ENCODE measurements at regions of chr12 and their contacts with region 1.

Region 1: GRCh38 chr12:117119592-117120198 is 20.5 kb upstream of the TESC start:
- DNase-seq: no peak
- ATAC-seq: peak; percentile 39 to 56

Region 2: DNA sequence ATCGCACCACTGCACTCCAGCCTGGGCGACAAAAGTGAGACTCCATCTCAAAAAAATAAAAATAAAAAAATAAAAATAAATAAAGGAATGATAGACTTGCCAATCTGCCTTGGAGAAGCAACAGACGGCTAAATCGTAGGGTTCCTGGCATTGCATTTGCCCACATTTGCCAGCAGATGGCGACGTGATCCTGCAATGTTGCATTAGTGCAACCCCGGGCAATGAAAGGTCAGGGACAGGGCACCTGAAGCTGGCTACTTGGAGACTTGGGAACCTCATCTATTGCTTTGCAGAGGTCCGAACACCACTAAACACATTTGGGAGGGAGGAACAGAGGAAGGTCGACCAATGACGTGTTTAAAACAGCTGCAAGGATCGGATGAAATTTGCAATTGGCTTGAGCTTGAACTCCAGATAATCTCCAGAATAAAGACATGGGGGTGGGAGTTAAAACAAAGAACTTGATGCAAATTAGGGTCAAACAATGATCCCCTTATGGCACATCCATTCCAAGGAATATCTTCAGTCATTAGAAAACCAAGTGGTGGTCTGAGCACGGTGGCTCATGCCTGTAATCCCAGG is 416.4 kb before region 1 on chr12:
- intact Hi-C with region 1: loop called (anchors 5 to 10 kb)
- DNase-seq: peak; percentile 70
- ATAC-seq: peak; percentile 80 to 81

Region 3: DNA sequence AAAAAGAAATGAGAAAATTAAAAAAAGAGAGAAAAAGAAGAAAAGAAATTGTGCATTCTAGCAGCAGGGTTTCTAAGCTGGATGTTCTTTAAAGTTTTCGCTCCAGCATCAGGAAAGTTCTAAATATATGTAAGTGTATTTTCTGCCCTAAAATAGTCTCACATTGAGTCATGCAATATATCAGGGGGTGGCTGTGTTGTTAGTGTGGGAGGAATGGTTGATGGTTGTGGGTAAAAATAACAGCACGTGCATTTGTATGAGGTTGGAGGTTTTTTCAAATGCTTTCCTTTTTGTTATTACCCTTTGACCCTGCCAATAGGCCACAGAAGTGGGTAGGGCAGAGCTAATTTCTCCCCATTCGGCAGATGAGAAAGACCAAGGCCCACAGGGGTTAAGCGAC is 135.7 kb after region 1 on chr12:
- intact Hi-C with region 1: no loop called
- DNase-seq: no peak
- ATAC-seq: no peak